ENCODE measurements at regions of chr17 and their contacts with region 1.

Region 1: DNA sequence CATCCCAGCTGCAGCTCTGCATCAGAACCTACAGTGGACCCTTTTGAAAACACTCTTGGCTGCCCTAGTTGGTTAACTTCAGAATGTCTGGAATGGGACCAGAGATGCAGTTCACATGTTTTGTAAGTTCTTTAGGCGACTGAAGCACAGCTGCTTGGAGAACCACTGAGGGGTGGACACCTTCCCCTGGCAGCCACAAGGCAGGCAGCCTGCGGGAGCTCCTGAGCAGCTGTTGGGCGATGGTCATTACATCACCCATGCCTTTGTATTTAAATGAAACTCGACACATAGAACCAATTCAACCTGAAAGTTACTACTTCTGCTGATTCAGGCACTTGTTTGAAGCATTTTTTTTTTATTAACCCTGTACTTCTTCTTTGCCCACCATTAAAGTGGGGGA is 151.5 kb downstream of the LGALS9B start:
- DNase-seq: no peak
- H3K4me3 Mint-ChIP-seq: no peak overlapping the region
- H3K27ac Mint-ChIP-seq: no peak overlapping the region
- H3K4me1 Mint-ChIP-seq: no peaks in the 10 kb centered on the region
- H3K27me3 Mint-ChIP-seq: no peaks in the 10 kb centered on the region

Region 2: DNA sequence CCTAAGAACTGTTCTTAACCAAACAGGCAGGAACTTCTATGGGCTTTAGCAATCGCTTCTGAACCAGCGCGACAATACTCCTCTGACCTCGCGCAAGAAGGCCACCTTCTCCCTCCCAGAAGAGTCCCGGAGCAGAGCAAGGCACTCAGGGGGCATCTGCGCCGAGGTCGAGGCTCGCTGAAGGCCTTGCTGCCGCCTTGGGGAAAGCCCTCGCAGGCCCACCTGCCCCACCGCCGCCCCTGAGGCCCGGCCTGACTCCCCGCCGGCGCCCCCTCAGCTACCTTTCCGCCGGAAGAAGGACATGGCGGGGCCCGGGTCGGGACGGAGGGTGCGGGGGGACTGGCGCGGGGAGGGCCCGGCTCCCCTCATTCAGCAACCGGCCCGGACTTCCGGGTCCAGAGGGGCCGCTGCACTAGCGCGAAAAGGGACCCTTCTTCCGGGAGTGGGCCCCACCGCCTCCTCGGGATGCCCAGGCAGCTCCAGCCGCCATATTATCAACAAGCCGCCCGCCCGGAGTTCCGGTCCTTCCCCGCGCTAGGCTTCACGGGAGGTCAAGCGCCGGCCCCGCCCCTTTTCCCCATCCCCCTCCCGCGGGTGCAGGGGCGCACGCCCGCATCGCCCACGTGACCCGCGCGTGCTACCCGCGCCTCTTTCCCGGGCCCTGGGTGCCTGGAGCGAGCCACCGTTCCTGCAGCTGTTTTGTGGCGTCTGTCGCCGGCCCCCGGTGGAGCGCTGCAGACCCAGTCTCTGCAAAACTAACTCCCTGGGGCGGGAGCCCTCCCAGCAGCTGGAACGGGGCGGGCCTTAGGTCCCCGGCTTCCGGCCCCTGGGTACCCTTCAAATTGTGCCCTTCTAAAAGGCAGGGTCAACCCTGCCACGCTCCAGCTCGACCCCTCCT is 338.3 kb before region 1 on chr17 and contains the start of gene AKAP10:
- CTCF ChIA-PET with region 1: no interaction called
- POLR2A ChIA-PET with region 1: no interaction called
- intact Hi-C with region 1: loop called (anchors 5 kb)
- DNase-seq: peak; percentile 96
- H3K4me3 Mint-ChIP-seq: peak within 1 kb of the TSS; percentile 94
- H3K27ac Mint-ChIP-seq: peak within 1 kb of the TSS; percentile 97
- H3K4me1 Mint-ChIP-seq: peaks cover 49% of the 10 kb centered on the region
- H3K27me3 Mint-ChIP-seq: no peaks in the 10 kb centered on the region
- total RNA-seq, gene AKAP10: 28.4 to 31.8 TPM

Region 3: GRCh38 chr17:19992803-19993713 is 322.8 kb before region 1 on chr17:
- CTCF ChIA-PET with region 1: interaction called, 9 read pairs
- POLR2A ChIA-PET with region 1: no interaction called
- intact Hi-C with region 1: loop called (anchors 5 kb)
- DNase-seq: peak; percentile 85
- H3K4me3 Mint-ChIP-seq: peak overlapping the region; percentile 16
- H3K27ac Mint-ChIP-seq: no peak overlapping the region
- H3K4me1 Mint-ChIP-seq: peaks cover 9% of the 10 kb centered on the region
- H3K27me3 Mint-ChIP-seq: peaks cover 5% of the 10 kb centered on the region

Region 4: GRCh38 chr17:20121359-20122253 is 194.2 kb before region 1 on chr17:
- CTCF ChIA-PET with region 1: interaction called, 35 read pairs
- POLR2A ChIA-PET with region 1: no interaction called
- intact Hi-C with region 1: loop called (anchors 5 kb)
- DNase-seq: peak; percentile 74
- H3K4me3 Mint-ChIP-seq: no peak overlapping the region
- H3K27ac Mint-ChIP-seq: no peak overlapping the region
- H3K4me1 Mint-ChIP-seq: no peaks in the 10 kb centered on the region
- H3K27me3 Mint-ChIP-seq: no peaks in the 10 kb centered on the region

Region 5: DNA sequence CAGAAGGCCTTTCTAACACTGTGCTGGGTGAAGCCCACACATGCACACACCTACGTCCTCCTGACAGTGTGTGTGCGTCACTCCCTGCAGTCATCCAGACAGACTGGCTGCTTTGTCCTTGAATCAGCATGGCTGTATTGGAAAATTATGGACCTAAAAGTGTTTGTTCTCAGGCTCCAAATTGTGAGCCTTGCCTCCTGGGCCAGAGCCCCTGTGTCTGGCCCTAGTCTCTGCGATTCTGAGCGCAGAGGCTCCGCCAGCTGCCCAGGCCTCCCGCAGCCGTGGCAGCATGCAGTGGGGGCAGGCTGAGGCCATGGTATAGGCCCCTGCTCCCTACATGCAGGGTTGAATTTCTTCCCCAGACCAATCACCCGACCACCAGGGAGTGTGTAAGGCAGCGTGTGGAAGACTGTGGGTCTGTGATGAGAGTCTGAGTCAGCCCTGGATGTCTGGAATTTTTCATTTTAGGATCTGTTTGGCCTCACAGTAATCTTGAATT is 15.3 kb before region 1 on chr17:
- CTCF ChIA-PET with region 1: no interaction called
- POLR2A ChIA-PET with region 1: no interaction called
- intact Hi-C with region 1: no loop called
- DNase-seq: no peak
- H3K4me3 Mint-ChIP-seq: no peak overlapping the region
- H3K27ac Mint-ChIP-seq: no peak overlapping the region
- H3K4me1 Mint-ChIP-seq: no peaks in the 10 kb centered on the region
- H3K27me3 Mint-ChIP-seq: no peaks in the 10 kb centered on the region

Measured in activated CD4-positive, alpha-beta memory T cell treated with anti-CD3 and anti-CD28 coated beads for 36 hours (primary cell).